HepG2 (cell line): ENCODE measurements at regions of chr11 and their contacts with region 1.

Region 1: DNA sequence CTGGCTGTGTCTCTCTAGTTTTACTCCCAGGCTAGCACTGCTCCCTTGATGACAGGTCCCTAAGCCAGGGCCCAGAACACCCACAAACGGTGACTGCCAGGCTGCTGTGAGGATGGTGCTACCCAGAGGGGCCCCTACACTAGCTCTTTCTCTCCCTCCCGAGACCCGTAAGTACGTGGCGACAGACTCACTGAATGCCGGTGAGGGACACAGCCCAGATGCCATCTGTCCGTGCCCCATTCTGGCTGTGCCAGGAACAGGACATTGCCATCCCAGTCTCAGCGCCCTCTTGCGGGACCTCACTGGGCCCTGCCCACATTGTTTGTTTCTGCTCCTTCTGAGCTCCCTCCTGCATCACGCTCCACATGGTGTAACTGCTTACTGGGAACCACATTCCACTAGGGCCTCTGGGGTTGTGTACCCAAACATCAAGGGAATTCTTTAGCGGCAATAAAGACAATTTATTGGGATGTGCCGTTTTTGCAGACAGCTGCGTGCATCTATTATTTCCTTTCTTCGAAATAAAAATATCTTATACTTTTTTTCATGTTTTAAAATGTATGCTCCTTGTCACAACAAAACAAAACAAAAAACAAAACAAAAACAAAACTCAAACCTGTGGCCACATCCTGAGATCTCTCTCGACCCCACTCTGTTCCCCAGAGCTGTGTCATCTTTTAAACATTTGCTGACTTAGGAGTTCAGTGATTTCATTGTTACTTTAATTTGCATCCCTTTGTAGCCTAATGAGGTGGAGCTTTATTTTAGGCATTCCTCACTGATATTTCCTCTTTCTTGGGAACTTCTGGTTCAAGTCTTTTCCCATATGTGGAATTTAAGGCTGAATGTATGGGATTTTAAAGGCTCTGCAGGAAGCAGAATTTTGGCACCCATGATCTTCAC is 4.4 kb upstream of the TPCN2 start:
- DNase-seq: peak; percentile 68
- ATAC-seq: peak; percentile 72
- H3K4me3 ChIP-seq: no peak overlapping the region
- H3K27ac ChIP-seq: no peak overlapping the region
- H3K4me1 ChIP-seq: peaks cover 26% of the 10 kb centered on the region
- H3K27me3 ChIP-seq: no peaks in the 10 kb centered on the region
- CTCF ChIP-seq: peak; percentile 85
- EP300 ChIP-seq: no peak
- POLR2A ChIP-seq: no peak
- RAD21 ChIP-seq: peak; percentile 52; the same call in 1 of the 2 replicates

Region 2: GRCh38 chr11:69007975-69008381 is 36.4 kb before region 1 on chr11:
- CTCF ChIA-PET with region 1: no interaction called
- POLR2A ChIA-PET with region 1: no interaction called
- in situ Hi-C with region 1: no loop called
- intact Hi-C with region 1: loop called (anchors 1 kb)
- DNase-seq: peak; percentile 27
- ATAC-seq: peak; percentile 82
- H3K4me3 ChIP-seq: peak overlapping the region in 2 of 3 experiments; percentile 14 to 47; a peak in 2 of 6 replicates
- H3K27ac ChIP-seq: peak overlapping the region; percentile 51
- H3K4me1 ChIP-seq: peaks cover 41% of the 10 kb centered on the region
- H3K27me3 ChIP-seq: peaks cover 23 to 47% of the 10 kb centered on the region in 2 experiments
- CTCF ChIP-seq: peak; percentile 18; the same call in 1 of the 2 replicates
- EP300 ChIP-seq: peak in 1 of 2 experiments; percentile 6; a peak in 1 of 4 replicates
- POLR2A ChIP-seq: no peak
- RAD21 ChIP-seq: no peak